Transverse colon (tissue), 4 donors: ENCODE measurements at regions of chrX and their contacts with region 1.

Region 1: GRCh38 chrX:40083120-40083978 is 14.4 kb downstream of the BCOR start:
- DNase-seq: no peak
- H3K4me3 ChIP-seq: peak overlapping the region; percentile 14 to 50 (median 28)
- H3K27ac ChIP-seq: peak overlapping the region; percentile 19 to 53 (median 52)
- H3K4me1 ChIP-seq: peaks cover 16 to 67% (median 41%) of the 10 kb centered on the region in 4 donors
- H3K27me3 ChIP-seq: no peaks in the 10 kb centered on the region
- CTCF ChIP-seq: peak in 2 of 5 experiments; percentile 12 to 17
- EP300 ChIP-seq: no peak
- POLR2A ChIP-seq: no peak

Region 2: DNA sequence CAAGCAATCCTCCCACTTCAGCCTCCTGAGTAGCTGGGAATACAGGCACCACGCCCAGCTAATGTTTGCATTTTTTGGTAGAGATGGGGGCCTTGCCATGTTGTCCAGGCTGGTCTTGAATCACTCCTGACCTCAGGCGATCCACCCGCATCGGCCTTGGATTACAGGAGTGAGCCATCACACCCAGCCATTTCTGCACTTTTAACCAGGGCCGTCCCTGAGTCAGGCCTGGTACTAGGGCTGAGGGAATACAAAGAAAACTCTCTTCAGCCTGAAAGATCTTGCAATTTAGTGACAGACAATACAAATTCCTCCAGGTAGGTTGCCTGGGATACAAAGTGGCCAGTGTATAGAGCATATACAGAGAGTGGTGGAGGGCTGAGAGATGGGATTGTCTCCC is 51.4 kb before region 1 on chrX:
- in situ Hi-C with region 1: loop called in 1 of 4 experiments (anchors 10 kb)
- intact Hi-C with region 1: no loop called
- DNase-seq: no peak
- H3K4me3 ChIP-seq: no peak overlapping the region
- H3K27ac ChIP-seq: no peak overlapping the region
- H3K4me1 ChIP-seq: no peaks in the 10 kb centered on the region
- H3K27me3 ChIP-seq: no peaks in the 10 kb centered on the region
- CTCF ChIP-seq: no peak
- EP300 ChIP-seq: no peak
- POLR2A ChIP-seq: no peak

Region 3: DNA sequence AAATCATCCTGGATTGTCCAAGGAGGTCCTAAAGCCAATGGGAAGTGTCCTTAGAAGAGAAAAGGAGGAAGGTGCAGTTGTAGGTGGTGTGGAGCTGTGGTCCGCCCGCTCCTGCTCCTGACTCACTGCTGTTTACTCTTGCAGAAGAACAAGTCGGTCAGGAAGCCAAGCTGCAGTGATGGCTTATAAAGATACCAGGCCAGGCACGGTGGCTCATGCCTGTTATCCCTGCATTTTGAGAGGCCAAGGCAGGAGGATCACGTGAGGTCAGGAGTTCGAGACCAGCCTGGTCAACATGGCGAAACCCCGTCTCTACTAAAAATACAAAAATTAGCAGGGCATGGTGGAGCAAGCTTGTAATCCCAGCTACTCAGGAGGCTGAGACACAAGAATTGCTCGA is 431.1 kb after region 1 on chrX:
- in situ Hi-C with region 1: no loop called
- intact Hi-C with region 1: no loop called
- DNase-seq: no peak
- H3K4me3 ChIP-seq: no peak overlapping the region
- H3K27ac ChIP-seq: no peak overlapping the region
- H3K4me1 ChIP-seq: no peaks in the 10 kb centered on the region
- H3K27me3 ChIP-seq: no peaks in the 10 kb centered on the region
- CTCF ChIP-seq: no peak
- EP300 ChIP-seq: no peak
- POLR2A ChIP-seq: no peak

Region 4: GRCh38 chrX:40735325-40736169 is 652.2 kb after region 1 on chrX and contains the start of gene MED14:
- in situ Hi-C with region 1: no loop called
- intact Hi-C with region 1: no loop called
- DNase-seq: peak; percentile 93
- H3K4me3 ChIP-seq: peak within 1 kb of the TSS; percentile 66 to 88 (median 78)
- H3K27ac ChIP-seq: peak within 1 kb of the TSS; percentile 96 to 99 (median 97)
- H3K4me1 ChIP-seq: peaks cover 0 to 40% (median 18%) of the 10 kb centered on the region in 4 donors
- H3K27me3 ChIP-seq: no peaks in the 10 kb centered on the region
- CTCF ChIP-seq: peak; percentile 35 to 77 (median 47)
- EP300 ChIP-seq: no peak
- POLR2A ChIP-seq: peak; percentile 80
- total RNA-seq, gene MED14: 28.8 to 81.0 (median 68.0) TPM